CD4-positive, alpha-beta memory T cell (primary cell): ENCODE measurements at regions of chr6 and their contacts with region 1.

Region 1: GRCh38 chr6:159110013-159110412 is 59.2 kb upstream of the FNDC1 start:
- DNase-seq: peak; percentile 34 to 48 (median 40)
- H3K4me3 ChIP-seq: no peak overlapping the region
- H3K4me3 Mint-ChIP-seq: peak overlapping the region in 4 of 8 donors; percentile 26 to 60 (median 50)
- H3K27ac ChIP-seq: peak overlapping the region; percentile 90
- H3K27ac Mint-ChIP-seq: peak overlapping the region; percentile 88 to 94 (median 92)
- H3K4me1 ChIP-seq: peaks cover 81% of the 10 kb centered on the region
- H3K4me1 Mint-ChIP-seq: peaks cover 53 to 79% (median 63%) of the 10 kb centered on the region in 4 donors
- H3K27me3 ChIP-seq: no peaks in the 10 kb centered on the region
- H3K27me3 Mint-ChIP-seq: no peaks in the 10 kb centered on the region

Region 2: DNA sequence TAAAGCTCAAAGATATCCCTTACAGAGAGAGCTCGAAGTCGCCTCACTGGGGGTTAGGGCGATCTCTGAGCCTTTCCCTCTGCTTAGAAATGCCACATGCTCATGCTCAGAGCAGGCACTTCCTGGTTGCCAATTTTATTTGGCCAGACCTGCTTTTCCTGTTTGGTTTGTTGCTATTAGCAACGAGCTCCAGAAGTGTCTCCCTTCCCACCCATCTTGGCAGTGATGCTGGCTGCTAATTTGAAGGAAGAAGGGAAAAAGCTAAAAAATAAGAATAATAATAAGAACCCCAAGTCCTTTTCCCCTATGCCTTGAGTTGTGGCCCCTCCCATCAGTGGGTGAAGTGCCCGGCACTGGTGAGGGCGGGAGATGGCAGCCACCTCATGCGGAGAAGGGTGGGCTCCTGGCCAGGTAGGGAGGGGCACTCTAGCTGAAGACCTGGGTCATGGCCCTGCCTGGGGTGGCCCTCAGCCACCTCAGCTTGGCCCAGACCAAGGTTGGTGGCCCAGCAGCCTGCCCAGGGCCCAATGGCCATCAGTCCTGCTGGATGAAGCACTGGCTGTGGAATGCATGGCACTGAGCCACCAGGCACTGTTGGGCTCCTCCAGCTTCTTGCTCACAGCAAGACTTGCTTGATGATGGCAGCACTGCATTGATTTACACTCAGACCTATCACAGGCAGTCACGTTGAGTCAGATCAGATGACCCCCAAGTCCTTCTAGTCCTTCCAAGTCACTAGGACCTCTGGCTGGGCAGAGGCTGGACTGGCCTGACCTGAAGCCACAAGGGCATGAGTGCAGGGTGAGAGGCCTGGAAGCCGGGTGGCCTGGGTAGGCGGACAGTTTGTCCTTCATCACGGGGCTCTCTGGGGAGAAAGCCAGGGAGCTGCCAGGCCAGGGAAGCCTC is 1049.3 kb before region 1 on chr6:
- CTCF ChIA-PET with region 1: no interaction called
- POLR2A ChIA-PET with region 1: no interaction called
- intact Hi-C with region 1: no loop called
- DNase-seq: peak in 4 of 5 donors; percentile 11 to 30 (median 24)
- H3K4me3 ChIP-seq: no peak overlapping the region
- H3K4me3 Mint-ChIP-seq: peak overlapping the region in 4 of 8 donors; percentile 18 to 48 (median 31)
- H3K27ac ChIP-seq: peak overlapping the region; percentile 24
- H3K27ac Mint-ChIP-seq: peak overlapping the region; percentile 52 to 95 (median 81)
- H3K4me1 ChIP-seq: peaks cover 47% of the 10 kb centered on the region
- H3K4me1 Mint-ChIP-seq: peaks cover 12 to 39% (median 28%) of the 10 kb centered on the region in 4 donors
- H3K27me3 ChIP-seq: no peaks in the 10 kb centered on the region
- H3K27me3 Mint-ChIP-seq: no peaks in the 10 kb centered on the region

Region 3: DNA sequence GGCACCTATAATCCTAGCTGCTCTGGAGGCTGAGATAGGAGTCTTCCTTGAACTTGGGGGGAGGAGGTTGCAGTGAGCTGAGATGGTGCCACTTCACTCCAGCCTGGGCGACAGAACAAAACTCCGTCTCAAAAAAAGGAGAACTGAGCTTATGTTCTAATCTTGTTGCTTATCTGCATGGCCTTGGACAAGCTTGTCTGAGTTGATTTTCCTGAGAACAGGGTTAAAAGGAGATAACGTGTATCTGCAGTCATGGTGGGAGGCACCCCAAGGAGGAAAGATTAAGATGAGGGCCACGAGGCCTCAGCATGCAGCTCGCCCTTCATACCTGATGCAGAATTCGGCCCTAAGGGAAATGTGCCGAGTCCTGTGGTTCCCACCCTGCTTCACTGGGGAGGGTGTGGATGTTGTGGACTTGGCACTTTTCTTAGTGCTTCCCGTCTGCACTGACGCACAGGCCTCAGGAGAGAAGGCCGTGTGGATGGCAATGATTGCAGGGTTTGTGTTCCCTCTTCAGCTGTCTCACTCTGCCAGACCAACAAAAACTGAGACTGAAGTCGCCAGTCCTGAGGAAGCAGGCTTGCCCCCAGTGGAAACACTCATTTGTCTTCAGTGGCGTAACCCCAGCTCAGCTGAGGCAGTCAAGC is 347.1 kb before region 1 on chr6:
- CTCF ChIA-PET with region 1: no interaction called
- POLR2A ChIA-PET with region 1: no interaction called
- intact Hi-C with region 1: no loop called
- DNase-seq: no peak
- H3K4me3 ChIP-seq: no peak overlapping the region
- H3K4me3 Mint-ChIP-seq: no peak overlapping the region
- H3K27ac ChIP-seq: no peak overlapping the region
- H3K27ac Mint-ChIP-seq: peak overlapping the region; percentile 26 to 91 (median 65)
- H3K4me1 ChIP-seq: no peaks in the 10 kb centered on the region
- H3K4me1 Mint-ChIP-seq: peaks cover 0 to 16% (median 1%) of the 10 kb centered on the region in 4 donors
- H3K27me3 ChIP-seq: no peaks in the 10 kb centered on the region
- H3K27me3 Mint-ChIP-seq: no peaks in the 10 kb centered on the region

Region 4: DNA sequence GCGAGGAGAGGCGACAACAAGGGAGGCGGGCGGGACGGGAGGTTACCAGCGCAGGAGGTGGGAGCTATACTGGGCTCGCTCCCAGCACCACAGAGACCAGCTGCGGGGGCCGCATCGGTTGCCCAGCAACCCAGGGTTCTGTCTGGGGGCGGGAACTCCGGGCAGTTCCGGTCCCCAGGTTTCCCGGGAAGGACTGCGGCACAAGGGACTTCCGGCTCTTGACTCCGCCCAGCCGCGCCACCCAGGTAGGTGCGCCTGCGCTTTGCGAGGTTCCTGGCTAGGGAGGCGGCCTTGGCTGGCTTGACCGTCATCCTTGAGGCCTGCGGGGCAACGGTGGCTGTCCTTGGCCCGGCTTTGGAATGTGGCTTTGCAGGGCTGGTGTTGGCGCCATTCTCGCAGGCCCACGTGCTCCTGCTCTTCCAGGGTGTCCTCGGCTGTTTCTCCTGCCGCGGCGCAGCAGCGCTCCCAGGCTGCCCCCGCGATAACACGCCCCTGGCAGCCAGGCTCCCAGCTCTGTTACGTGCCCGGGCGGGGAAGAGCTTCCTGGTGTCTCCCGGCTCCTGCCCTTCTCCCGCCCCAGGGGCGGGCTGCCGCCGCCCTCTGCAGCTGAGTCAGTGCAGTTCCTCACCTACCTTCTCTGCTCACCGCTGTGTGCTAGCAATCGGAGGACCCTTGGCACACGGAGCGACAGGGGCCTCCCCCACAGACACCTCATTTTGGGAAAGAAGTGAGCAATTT is 110.2 kb before region 1 on chr6 and contains the start of gene RSPH3:
- CTCF ChIA-PET with region 1: interaction called, 676 read pairs
- POLR2A ChIA-PET with region 1: interaction called, 144 read pairs
- intact Hi-C with region 1: no loop called
- DNase-seq: peak; percentile 81 to 87 (median 83)
- H3K4me3 ChIP-seq: peak within 1 kb of the TSS; percentile 84
- H3K4me3 Mint-ChIP-seq: peak within 1 kb of the TSS; percentile 96 to 99 (median 98)
- H3K27ac ChIP-seq: peak within 1 kb of the TSS; percentile 73
- H3K27ac Mint-ChIP-seq: peak within 1 kb of the TSS; percentile 92 to 97 (median 95)
- H3K4me1 ChIP-seq: peaks cover 18% of the 10 kb centered on the region
- H3K4me1 Mint-ChIP-seq: peaks cover 10 to 33% (median 18%) of the 10 kb centered on the region in 4 donors
- H3K27me3 ChIP-seq: no peaks in the 10 kb centered on the region
- H3K27me3 Mint-ChIP-seq: no peaks in the 10 kb centered on the region
- total RNA-seq, gene RSPH3: 3.4 to 3.5 TPM

Region 5: DNA sequence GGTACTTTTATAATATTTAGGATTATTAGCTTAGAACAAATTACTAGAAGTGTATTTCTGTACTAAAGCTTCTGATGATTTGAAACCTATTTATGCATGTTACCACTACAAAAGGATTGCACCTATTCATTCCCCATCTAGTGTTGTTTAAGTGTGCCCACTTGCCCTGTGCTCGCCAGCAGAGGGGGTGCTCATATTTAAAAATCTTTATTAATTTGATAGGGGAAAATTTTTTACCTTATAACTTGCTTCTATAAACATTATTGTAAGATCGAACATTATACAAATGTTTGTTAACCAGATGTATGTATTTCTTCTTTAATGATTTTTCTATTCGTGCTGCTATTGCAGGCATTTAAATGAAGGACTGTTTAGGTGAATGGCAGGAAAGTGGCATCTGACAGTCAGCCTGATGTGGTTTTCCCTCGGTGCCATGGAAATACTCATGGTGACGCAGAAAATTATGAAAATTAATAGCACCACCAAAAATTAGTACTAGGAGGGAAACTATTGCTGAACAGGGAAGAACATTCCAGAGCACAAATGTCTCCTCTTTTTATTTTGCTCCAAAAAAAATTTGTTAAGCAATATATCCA is 15.1 kb after region 1 on chr6:
- CTCF ChIA-PET with region 1: interaction called, 21 read pairs
- POLR2A ChIA-PET with region 1: interaction called, 6 read pairs
- intact Hi-C with region 1: no loop called
- DNase-seq: no peak
- H3K4me3 ChIP-seq: no peak overlapping the region
- H3K4me3 Mint-ChIP-seq: no peak overlapping the region
- H3K27ac ChIP-seq: no peak overlapping the region
- H3K27ac Mint-ChIP-seq: no peak overlapping the region
- H3K4me1 ChIP-seq: no peaks in the 10 kb centered on the region
- H3K4me1 Mint-ChIP-seq: no peaks in the 10 kb centered on the region
- H3K27me3 ChIP-seq: no peaks in the 10 kb centered on the region
- H3K27me3 Mint-ChIP-seq: peaks cover 0 to 1% of the 10 kb centered on the region in 2 donors

Region 6: DNA sequence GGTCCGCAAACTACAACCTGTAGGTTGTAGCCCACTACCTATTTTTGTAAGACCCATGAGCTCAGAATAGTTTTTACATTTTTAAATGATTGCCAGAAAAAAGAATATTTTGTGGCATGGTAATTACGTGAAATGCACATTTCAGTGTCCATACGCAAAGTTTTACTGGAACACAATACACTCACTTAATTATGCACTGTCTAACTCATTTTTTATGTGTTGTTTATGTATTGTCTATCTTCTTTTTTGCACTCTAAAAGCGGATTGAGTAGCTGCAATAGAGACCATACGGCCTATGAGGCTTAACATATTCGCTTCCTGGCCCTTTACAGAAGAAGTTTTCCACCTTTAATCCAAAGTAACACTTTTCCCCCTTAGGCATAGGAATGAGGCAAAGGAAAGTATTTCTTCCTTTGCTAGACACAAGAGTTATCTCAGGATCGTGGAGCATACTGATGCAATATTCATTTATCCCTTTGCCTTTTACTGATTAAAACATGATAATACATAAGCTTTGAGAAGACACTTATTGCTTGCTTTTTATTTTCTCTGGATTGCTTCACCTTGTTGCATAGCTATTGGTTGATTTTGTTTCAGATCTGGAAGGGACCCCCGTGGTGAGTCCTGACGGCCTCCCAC is 129.0 kb after region 1 on chr6:
- CTCF ChIA-PET with region 1: no interaction called
- POLR2A ChIA-PET with region 1: no interaction called
- intact Hi-C with region 1: no loop called
- DNase-seq: no peak
- H3K4me3 ChIP-seq: no peak overlapping the region
- H3K4me3 Mint-ChIP-seq: no peak overlapping the region
- H3K27ac ChIP-seq: no peak overlapping the region
- H3K27ac Mint-ChIP-seq: no peak overlapping the region
- H3K4me1 ChIP-seq: no peaks in the 10 kb centered on the region
- H3K4me1 Mint-ChIP-seq: peaks cover 0 to 8% (median under 1%) of the 10 kb centered on the region in 4 donors
- H3K27me3 ChIP-seq: peaks cover 10% of the 10 kb centered on the region
- H3K27me3 Mint-ChIP-seq: peaks cover 35 to 37% of the 10 kb centered on the region in 2 donors